SK-N-SH (cell line): ENCODE measurements at regions of chr1 and their contacts with region 1.

Region 1: GRCh38 chr1:95116580-95117206 is 462 bp upstream of the TLCD4 start:
- DNase-seq: peak; percentile 83
- H3K4me3 ChIP-seq: peak overlapping the region; percentile 69 to 77
- H3K27ac ChIP-seq: no peak overlapping the region
- H3K4me1 ChIP-seq: peaks cover 0 to 7% of the 10 kb centered on the region in 2 experiments; a peak in 2 of 4 replicates
- H3K27me3 ChIP-seq: no peaks in the 10 kb centered on the region; the same call in 1 of the 2 replicates
- CTCF ChIP-seq: peak; percentile 65
- EP300 ChIP-seq: no peak
- RAD21 ChIP-seq: peak; percentile 56

Region 2: GRCh38 chr1:94962409-94963265 is 154.1 kb before region 1 on chr1:
- CTCF ChIA-PET with region 1: no interaction called
- POLR2A ChIA-PET with region 1: no interaction called
- DNase-seq: no peak
- H3K4me3 ChIP-seq: no peak overlapping the region
- H3K27ac ChIP-seq: peak overlapping the region in 1 of 2 experiments; percentile 7; a peak in 1 of 4 replicates
- H3K4me1 ChIP-seq: peaks cover 0 to 8% of the 10 kb centered on the region in 2 experiments; a peak in 1 of 4 replicates
- H3K27me3 ChIP-seq: no peaks in the 10 kb centered on the region
- CTCF ChIP-seq: no peak
- EP300 ChIP-seq: no peak
- RAD21 ChIP-seq: no peak

Region 3: DNA sequence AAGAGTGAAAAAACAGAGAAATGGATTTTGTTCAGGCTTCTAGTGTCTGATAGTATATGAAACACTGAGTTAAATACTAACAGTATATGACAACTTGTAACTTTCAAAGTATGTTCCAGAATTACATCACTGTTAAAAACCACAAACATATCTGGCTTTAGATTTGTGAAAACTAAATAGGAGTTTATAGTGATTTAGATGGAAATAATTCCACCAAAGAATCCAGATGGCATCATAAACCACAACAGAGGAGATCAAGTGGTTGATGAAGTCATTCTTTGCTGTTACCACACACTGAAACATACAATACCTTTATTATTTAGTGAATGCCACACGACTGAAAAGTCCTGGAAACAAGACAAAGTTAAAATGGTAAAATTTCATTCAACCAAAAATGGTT is 81.2 kb before region 1 on chr1:
- CTCF ChIA-PET with region 1: no interaction called
- POLR2A ChIA-PET with region 1: no interaction called
- DNase-seq: no peak
- H3K4me3 ChIP-seq: no peak overlapping the region
- H3K27ac ChIP-seq: peak overlapping the region in 1 of 2 experiments; percentile 90; a peak in 2 of 4 replicates
- H3K4me1 ChIP-seq: peaks cover 8 to 19% of the 10 kb centered on the region in 2 experiments
- H3K27me3 ChIP-seq: no peaks in the 10 kb centered on the region
- CTCF ChIP-seq: no peak
- EP300 ChIP-seq: peak in 1 of 2 experiments; percentile 97; a peak in 2 of 4 replicates
- RAD21 ChIP-seq: no peak

Region 4: DNA sequence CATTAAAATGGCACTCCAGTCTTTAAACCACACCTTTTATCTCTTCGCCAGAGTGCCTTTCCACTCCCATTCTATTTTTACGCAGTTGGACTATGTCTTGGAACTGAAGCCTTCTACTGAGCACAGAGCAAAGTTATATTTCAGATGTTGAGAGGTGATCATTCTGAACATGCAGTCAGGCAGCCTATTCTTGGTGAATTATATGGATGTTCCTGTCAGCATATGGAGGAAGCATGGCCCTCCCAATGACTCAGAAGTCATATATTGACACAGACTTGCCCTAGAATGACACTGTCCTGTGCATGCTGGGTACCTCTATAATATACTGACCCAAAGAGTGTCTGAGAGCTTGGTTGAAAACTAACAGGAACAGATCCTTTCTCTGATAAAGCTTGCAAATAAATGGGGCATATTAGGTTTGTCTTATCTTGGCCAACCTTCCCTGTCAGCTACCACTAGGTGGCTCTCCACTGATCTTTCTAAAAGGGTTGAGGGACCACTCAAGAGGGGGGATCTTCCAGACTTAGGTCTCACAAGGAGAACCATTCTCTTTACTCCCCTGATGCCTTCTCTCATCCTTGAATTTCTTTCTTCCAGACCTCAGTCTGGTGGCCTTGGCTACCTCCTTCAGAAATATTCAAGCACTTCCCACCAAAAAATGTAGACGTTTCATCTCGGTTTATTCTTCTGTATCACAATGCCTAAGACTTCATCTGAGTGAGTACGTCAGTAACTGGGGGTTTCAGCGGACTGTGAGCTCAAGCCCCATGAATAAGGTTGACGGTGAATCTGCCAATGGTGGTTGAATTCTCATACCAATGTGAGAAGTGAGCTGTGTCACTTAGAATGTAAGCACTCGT is 32.1 kb before region 1 on chr1:
- CTCF ChIA-PET with region 1: interaction called, 11 read pairs
- POLR2A ChIA-PET with region 1: no interaction called
- DNase-seq: peak; percentile 61
- H3K4me3 ChIP-seq: no peak overlapping the region
- H3K27ac ChIP-seq: no peak overlapping the region
- H3K4me1 ChIP-seq: peaks cover 5% of the 10 kb centered on the region in 2 experiments; a peak in 2 of 4 replicates
- H3K27me3 ChIP-seq: no peaks in the 10 kb centered on the region; the same call in 1 of the 2 replicates
- CTCF ChIP-seq: peak; percentile 68
- EP300 ChIP-seq: no peak
- RAD21 ChIP-seq: peak; percentile 53

Region 5: DNA sequence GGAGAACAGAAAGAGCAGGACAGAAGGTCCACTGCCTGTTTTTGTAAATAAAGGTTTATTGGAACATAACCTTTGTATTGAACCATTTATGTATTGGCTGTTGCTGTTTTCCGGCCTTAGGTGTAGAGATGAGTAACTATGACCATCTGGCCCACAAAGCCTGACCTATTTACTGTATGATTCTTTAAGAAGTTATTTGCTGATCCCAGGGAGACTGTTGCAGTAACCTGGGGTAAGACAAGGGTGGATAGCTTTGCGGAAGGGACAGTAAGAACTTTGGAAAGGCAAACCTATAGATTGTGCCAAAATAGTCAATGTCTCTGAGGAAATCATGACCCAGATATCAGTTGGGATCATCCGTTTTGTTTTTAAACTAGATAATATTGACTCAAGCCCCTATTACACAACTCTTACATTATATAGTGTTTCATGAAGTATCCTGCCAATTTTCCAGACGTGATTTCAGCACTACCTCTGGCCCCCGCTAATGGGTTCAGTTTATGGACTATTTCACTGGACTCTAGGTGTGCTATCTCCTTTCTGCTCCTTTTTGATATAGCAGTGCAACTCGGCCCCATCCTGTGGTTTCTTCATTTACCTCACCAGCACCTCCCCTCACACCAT is 20.4 kb before region 1 on chr1:
- CTCF ChIA-PET with region 1: interaction called, 16 read pairs
- POLR2A ChIA-PET with region 1: no interaction called
- DNase-seq: no peak
- H3K4me3 ChIP-seq: no peak overlapping the region
- H3K27ac ChIP-seq: no peak overlapping the region
- H3K4me1 ChIP-seq: no peaks in the 10 kb centered on the region
- H3K27me3 ChIP-seq: peaks cover 4% of the 10 kb centered on the region; the same call in 1 of the 2 replicates
- CTCF ChIP-seq: no peak
- EP300 ChIP-seq: no peak
- RAD21 ChIP-seq: no peak

Region 6: GRCh38 chr1:95127380-95127779 is 10.7 kb after region 1 on chr1:
- CTCF ChIA-PET with region 1: interaction called, 13 read pairs
- POLR2A ChIA-PET with region 1: no interaction called
- DNase-seq: no peak
- H3K4me3 ChIP-seq: no peak overlapping the region
- H3K27ac ChIP-seq: no peak overlapping the region
- H3K4me1 ChIP-seq: no peaks in the 10 kb centered on the region; a peak in 1 of 4 replicates
- H3K27me3 ChIP-seq: no peaks in the 10 kb centered on the region
- CTCF ChIP-seq: no peak
- EP300 ChIP-seq: no peak
- RAD21 ChIP-seq: no peak